ENCODE measurements at regions of chr1 and their contacts with region 1.

Region 1: DNA sequence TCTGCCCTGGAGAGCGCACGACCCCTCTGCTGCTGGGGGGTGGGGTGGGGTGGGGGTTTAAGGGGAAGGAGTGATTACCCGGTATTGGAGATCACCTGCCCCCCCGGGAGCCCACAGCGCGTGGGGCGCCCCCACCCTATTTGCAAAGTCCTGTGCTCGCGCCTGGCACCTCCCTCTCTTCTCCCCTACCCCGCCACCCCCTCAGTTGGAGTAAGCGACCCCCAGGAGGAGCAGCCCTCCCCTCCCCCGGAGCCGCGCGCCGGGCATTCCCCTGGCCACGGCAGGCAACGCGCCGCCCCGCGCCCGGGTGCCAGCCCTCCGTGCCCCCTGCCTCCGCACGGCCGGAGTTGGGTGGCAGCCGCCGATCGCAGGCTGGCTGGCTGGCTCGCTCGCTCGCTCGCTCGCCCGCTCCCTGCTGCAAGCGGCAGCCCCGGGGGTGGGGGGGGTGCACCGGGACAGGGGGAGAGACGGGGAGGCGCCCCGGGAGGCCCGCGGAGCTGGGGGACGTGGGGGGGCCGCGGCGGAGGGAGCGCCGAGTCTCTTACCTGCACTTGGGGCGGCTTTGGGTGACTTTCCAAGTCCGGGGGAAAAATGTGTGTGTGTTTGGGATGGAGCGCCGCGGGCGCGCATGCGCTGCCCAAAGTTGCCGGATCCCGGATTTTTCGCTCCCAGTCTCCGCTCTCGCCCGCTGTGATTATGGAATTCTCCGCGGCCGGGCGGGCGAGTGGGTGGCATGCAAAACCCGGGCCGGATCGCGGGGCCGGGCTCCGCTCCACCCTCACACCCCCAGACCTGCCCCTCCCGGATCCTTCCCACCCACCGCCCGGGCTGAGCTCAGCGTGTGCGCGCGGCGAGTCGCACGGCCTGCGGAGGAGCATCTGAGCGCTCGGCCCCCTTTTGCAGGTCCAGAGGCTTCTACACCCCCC is at the start of gene CASZ1:
- DNase-seq: peak; percentile 79 to 90
- ATAC-seq: peak; percentile 43 to 64 (median 52)
- H3K4me3 ChIP-seq: peak within 1 kb of the TSS; percentile 80
- H3K27ac ChIP-seq: peak within 1 kb of the TSS; percentile 99
- H3K4me1 ChIP-seq: no peaks in the 10 kb centered on the region
- H3K27me3 ChIP-seq: peaks cover 0 to 6% (median 0%) of the 10 kb centered on the region in 3 donors
- CTCF ChIP-seq: no peak
- total RNA-seq, gene CASZ1: 53.1 to 83.3 (median 60.8) TPM

Region 2: GRCh38 chr1:10507111-10507879 is 289.0 kb before region 1 on chr1:
- intact Hi-C with region 1: loop called in 1 of 2 experiments (anchors 5 kb)
- DNase-seq: peak; percentile 61 to 81
- ATAC-seq: peak; percentile 74 to 82 (median 78)
- H3K4me3 ChIP-seq: no peak overlapping the region
- H3K27ac ChIP-seq: no peak overlapping the region
- H3K4me1 ChIP-seq: peaks cover 46% of the 10 kb centered on the region
- H3K27me3 ChIP-seq: no peaks in the 10 kb centered on the region
- CTCF ChIP-seq: peak; percentile 87

Region 3: GRCh38 chr1:10686404-10687040 is 109.8 kb before region 1 on chr1:
- intact Hi-C with region 1: loop called in 1 of 2 experiments (anchors 2 kb)
- DNase-seq: no peak
- ATAC-seq: peak in 1 of 4 donors; percentile 1
- H3K4me3 ChIP-seq: no peak overlapping the region
- H3K27ac ChIP-seq: peak overlapping the region; percentile 76
- H3K4me1 ChIP-seq: peaks cover 100% of the 10 kb centered on the region
- H3K27me3 ChIP-seq: no peaks in the 10 kb centered on the region
- CTCF ChIP-seq: no peak

Region 4: GRCh38 chr1:10830961-10831669 is 34.8 kb after region 1 on chr1:
- intact Hi-C with region 1: loop called in 1 of 2 experiments (anchors 5 kb)
- DNase-seq: peak in 1 of 2 donors; percentile 58
- ATAC-seq: peak in 3 of 4 donors; percentile 17 to 58 (median 44)
- H3K4me3 ChIP-seq: no peak overlapping the region
- H3K27ac ChIP-seq: no peak overlapping the region
- H3K4me1 ChIP-seq: peaks cover 12% of the 10 kb centered on the region
- H3K27me3 ChIP-seq: peaks cover 0 to 2% (median 0%) of the 10 kb centered on the region in 3 donors
- CTCF ChIP-seq: no peak

Region 5: DNA sequence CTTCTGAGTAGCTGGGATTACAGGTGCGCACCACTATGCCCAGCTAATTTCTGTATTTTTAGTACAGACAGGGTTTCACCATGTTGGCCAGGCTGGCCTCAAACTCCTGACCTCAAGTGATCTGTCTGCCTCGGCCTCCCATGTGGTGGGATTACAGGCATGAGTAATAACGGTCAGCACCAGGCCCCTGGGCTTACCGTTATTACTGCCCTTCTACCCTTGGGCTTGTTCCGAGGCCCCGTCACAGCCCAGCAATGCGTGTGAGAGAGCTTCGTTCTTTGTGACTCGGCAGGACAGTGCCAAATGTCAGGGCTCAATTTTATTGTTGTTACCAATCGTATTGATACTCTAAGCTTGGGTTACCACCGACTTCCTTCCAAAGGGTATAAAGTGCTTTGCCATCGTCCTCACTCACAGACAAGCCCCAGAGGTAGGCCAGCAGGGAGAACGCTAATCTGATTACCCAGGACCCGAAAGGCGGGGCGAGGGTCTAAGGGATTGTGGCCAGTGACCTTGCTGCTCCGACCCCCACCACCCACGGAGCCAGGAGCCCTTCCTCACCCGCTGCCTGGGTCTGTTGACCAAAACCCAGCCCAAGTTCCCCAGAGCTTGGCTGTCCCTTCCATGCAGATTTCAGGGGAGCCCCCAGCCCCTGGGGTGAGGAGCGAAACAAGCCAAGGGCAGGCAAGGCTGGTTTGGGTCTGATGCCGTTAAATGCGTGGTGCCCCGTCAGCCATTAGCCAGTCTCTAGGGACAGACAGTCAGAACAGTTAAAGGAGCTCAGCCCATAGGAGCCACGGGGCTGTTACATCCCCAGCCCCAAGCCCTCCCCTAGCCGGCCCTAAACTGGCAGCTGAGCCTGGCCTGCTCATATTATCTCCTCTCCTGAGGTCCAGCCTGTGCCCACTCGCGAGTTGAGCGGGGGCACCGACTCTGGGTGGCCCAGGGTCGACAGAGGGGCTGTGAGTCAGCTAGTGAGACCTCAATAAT is 55.0 kb after region 1 on chr1:
- intact Hi-C with region 1: loop called in 1 of 2 experiments (anchors 1 kb)
- DNase-seq: peak in 1 of 2 donors; percentile 80
- ATAC-seq: peak; percentile 81 to 88 (median 84)
- H3K4me3 ChIP-seq: no peak overlapping the region
- H3K27ac ChIP-seq: peak overlapping the region; percentile 86
- H3K4me1 ChIP-seq: peaks cover 20% of the 10 kb centered on the region
- H3K27me3 ChIP-seq: no peaks in the 10 kb centered on the region
- CTCF ChIP-seq: no peak

Region 6: DNA sequence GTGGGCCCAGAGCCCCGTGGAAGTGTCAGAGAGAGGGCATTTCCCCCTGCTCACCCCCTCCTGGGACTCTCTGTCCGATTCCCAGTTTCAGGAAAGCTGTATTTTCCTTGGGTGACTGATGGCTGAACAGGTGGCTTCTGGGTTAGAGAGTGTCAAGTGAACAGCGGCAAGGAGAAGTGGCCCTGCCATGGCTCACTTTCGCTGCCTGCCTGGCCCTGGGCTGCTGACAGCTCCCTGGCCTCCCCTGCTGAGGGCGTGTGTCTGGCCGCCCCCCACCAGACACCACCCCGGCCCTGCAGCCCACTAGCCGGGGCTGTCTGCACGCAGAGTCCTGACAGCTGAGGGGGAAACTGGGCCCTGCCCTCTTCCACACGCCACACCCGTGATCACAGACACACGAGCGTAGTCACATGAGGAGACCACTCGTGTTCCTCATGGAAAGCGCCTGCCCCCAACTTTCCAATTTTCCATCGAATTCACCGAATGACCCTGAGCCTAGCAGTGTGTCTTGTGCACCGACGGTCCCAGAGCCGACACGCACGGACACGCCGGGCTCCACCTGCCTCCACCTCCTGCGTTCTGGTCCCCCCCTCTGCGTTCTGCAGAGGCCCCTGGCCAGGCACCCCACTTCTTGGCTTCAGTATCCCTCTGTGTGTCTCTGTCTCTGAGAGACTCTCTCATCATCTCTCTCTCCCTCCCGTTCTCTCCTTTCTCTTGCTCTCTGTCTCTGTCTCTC is 60.7 kb after region 1 on chr1:
- intact Hi-C with region 1: loop called (anchors 1 to 5 kb)
- DNase-seq: peak in 1 of 2 donors; percentile 65
- ATAC-seq: peak; percentile 30 to 58 (median 56)
- H3K4me3 ChIP-seq: peak overlapping the region; percentile 35
- H3K27ac ChIP-seq: peak overlapping the region; percentile 99
- H3K4me1 ChIP-seq: peaks cover 46% of the 10 kb centered on the region
- H3K27me3 ChIP-seq: no peaks in the 10 kb centered on the region
- CTCF ChIP-seq: no peak

Region 7: GRCh38 chr1:10867138-10867721 is 70.9 kb after region 1 on chr1:
- intact Hi-C with region 1: loop called in 1 of 2 experiments (anchors 5 kb)
- DNase-seq: peak; percentile 72 to 83
- ATAC-seq: peak; percentile 81 to 87 (median 82)
- H3K4me3 ChIP-seq: peak overlapping the region; percentile 60
- H3K27ac ChIP-seq: no peak overlapping the region
- H3K4me1 ChIP-seq: peaks cover 17% of the 10 kb centered on the region
- H3K27me3 ChIP-seq: peaks cover 0 to 1% (median 0%) of the 10 kb centered on the region in 3 donors
- CTCF ChIP-seq: peak; percentile 91

Measured in psoas muscle (tissue), 8 donors.